ENCODE measurements at regions of chr6 and their contacts with region 1.

Region 1: DNA sequence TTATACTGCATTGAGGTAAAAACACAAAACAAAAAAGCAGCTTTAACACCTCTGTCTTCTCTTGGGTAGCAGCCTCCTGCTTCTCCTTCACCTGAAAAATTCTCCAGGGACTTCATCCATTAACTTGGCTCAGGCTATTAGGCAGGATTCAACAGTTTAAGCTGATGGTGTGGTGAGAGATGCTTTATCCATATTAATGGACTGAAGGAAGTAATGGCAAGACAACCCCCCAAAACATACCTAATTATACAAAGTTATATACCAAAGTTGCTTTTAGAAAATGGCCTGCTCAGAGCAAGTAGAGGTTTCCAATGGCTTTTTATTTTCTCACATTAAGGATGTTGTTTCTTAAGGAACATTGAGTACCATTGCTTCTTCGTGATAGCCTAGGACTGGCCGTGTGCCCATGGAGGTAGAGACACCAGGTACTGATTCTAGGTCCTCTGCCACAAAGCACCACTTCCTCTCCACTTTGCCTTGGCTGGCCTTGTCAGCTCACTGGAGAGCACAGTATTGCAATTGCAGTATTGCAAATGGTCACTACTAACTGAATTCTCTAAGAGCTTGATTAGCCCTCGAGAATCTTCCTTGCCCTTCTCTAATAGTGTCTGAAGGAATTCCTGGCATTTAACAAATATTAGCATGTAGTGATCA is 7.3 kb downstream of the EDN1 start:
- DNase-seq: no peak
- H3K4me3 ChIP-seq: no peak overlapping the region
- H3K27ac ChIP-seq: no peak overlapping the region
- H3K4me1 ChIP-seq: no peaks in the 10 kb centered on the region
- H3K27me3 ChIP-seq: no peaks in the 10 kb centered on the region
- CTCF ChIP-seq: no peak
- POLR2A ChIP-seq: no peak

Region 2: DNA sequence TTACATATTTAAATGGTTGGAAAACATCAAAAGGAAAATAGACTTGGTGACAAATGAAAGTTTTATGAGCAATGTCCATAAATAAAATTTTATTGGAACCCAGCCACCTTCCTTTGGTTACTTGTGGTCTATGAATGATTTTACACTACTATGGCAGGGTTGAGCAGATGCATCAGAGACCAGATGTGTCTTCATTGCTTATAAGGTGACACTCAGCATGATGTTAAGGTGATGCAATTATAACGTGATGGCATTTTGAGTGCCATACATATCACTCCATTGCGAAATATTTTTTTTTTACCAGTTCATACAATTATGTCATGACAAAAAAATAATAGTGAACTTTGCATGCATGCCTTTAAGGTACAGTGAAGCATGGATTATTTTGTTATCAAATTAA is 615.0 kb before region 1 on chr6:
- intact Hi-C with region 1: loop called (anchors 5 kb)
- DNase-seq: no peak
- H3K4me3 ChIP-seq: no peak overlapping the region
- H3K27ac ChIP-seq: no peak overlapping the region
- H3K4me1 ChIP-seq: no peaks in the 10 kb centered on the region
- H3K27me3 ChIP-seq: no peaks in the 10 kb centered on the region
- CTCF ChIP-seq: no peak
- POLR2A ChIP-seq: no peak

Region 3: DNA sequence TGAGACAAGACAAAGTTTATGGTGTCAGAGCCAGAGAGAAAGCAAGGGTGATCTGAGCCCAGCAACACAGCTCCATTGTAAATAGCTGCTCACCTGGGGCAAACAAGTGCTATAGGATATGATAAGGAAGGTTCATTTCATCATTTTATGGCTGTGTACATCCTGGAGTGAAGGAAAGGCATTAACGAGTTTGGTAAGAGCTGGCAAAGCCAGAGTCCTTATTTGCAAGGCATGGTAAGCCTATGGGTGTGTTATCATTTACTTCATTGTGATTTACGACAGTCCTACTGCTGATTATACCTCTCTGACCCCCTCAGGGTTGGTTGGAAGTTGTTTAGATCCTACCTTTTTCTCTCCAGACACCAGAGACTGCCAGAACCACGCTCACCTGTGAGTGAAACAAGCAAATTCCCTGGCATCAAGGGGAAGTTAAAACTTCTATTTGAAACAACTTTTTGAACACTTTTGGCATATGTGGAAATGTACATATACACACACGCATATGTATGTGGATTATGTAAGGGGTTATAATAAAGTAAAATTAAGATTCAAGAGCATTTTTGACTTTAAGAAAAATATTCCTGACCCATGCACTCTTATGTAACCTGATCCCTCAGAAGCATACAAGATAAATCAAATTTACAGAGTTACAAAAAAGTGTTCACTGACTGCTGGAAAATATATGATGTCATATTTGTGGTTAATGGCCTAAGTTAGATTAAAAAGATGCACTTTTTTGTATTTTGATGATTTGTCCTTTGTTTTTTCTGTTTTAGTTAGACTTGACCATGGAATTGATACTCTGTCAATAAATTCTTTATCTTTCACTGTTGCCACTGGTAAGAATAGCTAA is 47.7 kb before region 1 on chr6:
- intact Hi-C with region 1: loop called (anchors 2 kb)
- DNase-seq: no peak
- H3K4me3 ChIP-seq: no peak overlapping the region
- H3K27ac ChIP-seq: no peak overlapping the region
- H3K4me1 ChIP-seq: no peaks in the 10 kb centered on the region
- H3K27me3 ChIP-seq: no peaks in the 10 kb centered on the region
- CTCF ChIP-seq: no peak
- POLR2A ChIP-seq: no peak

Region 4: GRCh38 chr6:12522347-12522746 is 224.9 kb after region 1 on chr6:
- intact Hi-C with region 1: no loop called
- DNase-seq: no peak
- H3K4me3 ChIP-seq: no peak overlapping the region
- H3K27ac ChIP-seq: no peak overlapping the region
- H3K4me1 ChIP-seq: no peaks in the 10 kb centered on the region
- H3K27me3 ChIP-seq: no peaks in the 10 kb centered on the region
- CTCF ChIP-seq: no peak
- POLR2A ChIP-seq: no peak

Measured in breast epithelium (tissue), 4 donors.